ENCODE measurements at regions of chr12 and their contacts with region 1.

Region 1: GRCh38 chr12:90978117-90978770 is 23.3 kb upstream of the CCER1 start:
- DNase-seq: peak; percentile 81
- ATAC-seq: peak; percentile 83
- H3K4me3 ChIP-seq: no peak overlapping the region
- H3K27ac ChIP-seq: no peak overlapping the region
- H3K4me1 ChIP-seq: peaks cover 27% of the 10 kb centered on the region
- H3K27me3 ChIP-seq: no peaks in the 10 kb centered on the region
- CTCF ChIP-seq: peak; percentile 90

Region 2: GRCh38 chr12:90909069-90909770 is 69.0 kb before region 1 on chr12:
- CTCF ChIA-PET with region 1: no interaction called
- POLR2A ChIA-PET with region 1: no interaction called
- intact Hi-C with region 1: no loop called
- DNase-seq: peak; percentile 75
- ATAC-seq: peak; percentile 58
- H3K4me3 ChIP-seq: no peak overlapping the region
- H3K27ac ChIP-seq: no peak overlapping the region
- H3K4me1 ChIP-seq: 0 out of 2 replicates have a peak, but pooled peaks cover 10% of the 10 kb centered on the region
- H3K27me3 ChIP-seq: no peaks in the 10 kb centered on the region
- CTCF ChIP-seq: peak; percentile 92

Region 3: DNA sequence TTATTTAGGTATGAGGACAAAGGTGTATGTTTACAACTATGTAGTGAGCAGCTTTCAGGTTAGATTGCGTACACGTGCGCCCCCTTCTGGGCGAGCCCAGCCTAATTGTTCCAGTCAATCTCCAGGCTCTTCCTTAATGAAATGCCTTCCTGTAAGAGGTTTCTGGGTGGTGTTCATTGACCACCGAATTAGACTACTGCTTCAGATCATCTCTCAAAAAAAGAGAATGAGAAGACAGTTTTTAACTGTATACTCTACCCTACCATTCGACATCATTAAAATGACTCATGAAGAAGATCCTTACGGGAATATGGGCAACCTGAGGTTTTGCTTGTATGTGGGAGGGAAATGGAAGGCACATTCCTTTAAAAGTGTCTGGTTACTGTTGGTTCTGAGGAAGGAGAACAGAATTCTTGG is 130.9 kb after region 1 on chr12:
- CTCF ChIA-PET with region 1: interaction called, 4 read pairs
- POLR2A ChIA-PET with region 1: no interaction called
- intact Hi-C with region 1: loop called (anchors 1 kb)
- DNase-seq: peak; percentile 83
- ATAC-seq: peak; percentile 95
- H3K4me3 ChIP-seq: peak overlapping the region; percentile 3; the same call in 1 of the 2 replicates
- H3K27ac ChIP-seq: no peak overlapping the region
- H3K4me1 ChIP-seq: peaks cover 9% of the 10 kb centered on the region
- H3K27me3 ChIP-seq: no peaks in the 10 kb centered on the region
- CTCF ChIP-seq: peak; percentile 90

Region 4: GRCh38 chr12:91127751-91128150 is 149.5 kb after region 1 on chr12:
- CTCF ChIA-PET with region 1: no interaction called
- POLR2A ChIA-PET with region 1: no interaction called
- intact Hi-C with region 1: no loop called
- DNase-seq: peak; percentile 74
- ATAC-seq: peak; percentile 90
- H3K4me3 ChIP-seq: no peak overlapping the region
- H3K27ac ChIP-seq: peak overlapping the region; percentile 80
- H3K4me1 ChIP-seq: peaks cover 32% of the 10 kb centered on the region
- H3K27me3 ChIP-seq: no peaks in the 10 kb centered on the region
- CTCF ChIP-seq: no peak

Region 5: GRCh38 chr12:91239481-91239880 is 261.2 kb after region 1 on chr12:
- CTCF ChIA-PET with region 1: no interaction called
- POLR2A ChIA-PET with region 1: no interaction called
- intact Hi-C with region 1: loop called (anchors 1 kb)
- DNase-seq: no peak
- ATAC-seq: no peak
- H3K4me3 ChIP-seq: no peak overlapping the region
- H3K27ac ChIP-seq: no peak overlapping the region
- H3K4me1 ChIP-seq: no peaks in the 10 kb centered on the region
- H3K27me3 ChIP-seq: peaks cover 11% of the 10 kb centered on the region; the same call in 1 of the 2 replicates
- CTCF ChIP-seq: no peak

Region 6: GRCh38 chr12:91326058-91327027 is 348.1 kb after region 1 on chr12:
- CTCF ChIA-PET with region 1: interaction called, 4 read pairs
- POLR2A ChIA-PET with region 1: no interaction called
- intact Hi-C with region 1: loop called (anchors 1 kb)
- DNase-seq: peak; percentile 76
- ATAC-seq: no peak
- H3K4me3 ChIP-seq: no peak overlapping the region
- H3K27ac ChIP-seq: no peak overlapping the region
- H3K4me1 ChIP-seq: peaks cover 5% of the 10 kb centered on the region; the same call in 1 of the 2 replicates
- H3K27me3 ChIP-seq: no peaks in the 10 kb centered on the region
- CTCF ChIP-seq: peak; percentile 79

Region 7: GRCh38 chr12:91355150-91356006 is 377.1 kb after region 1 on chr12:
- CTCF ChIA-PET with region 1: no interaction called
- POLR2A ChIA-PET with region 1: no interaction called
- intact Hi-C with region 1: loop called (anchors 1 kb)
- DNase-seq: peak; percentile 82
- ATAC-seq: peak; percentile 92
- H3K4me3 ChIP-seq: no peak overlapping the region
- H3K27ac ChIP-seq: no peak overlapping the region
- H3K4me1 ChIP-seq: no peaks in the 10 kb centered on the region
- H3K27me3 ChIP-seq: no peaks in the 10 kb centered on the region
- CTCF ChIP-seq: peak; percentile 95